Right cardiac atrium (tissue), 5 donors: ENCODE measurements at regions of chr7 and their contacts with region 1.

Region 1: GRCh38 chr7:101153969-101154692 is at the start of gene AP1S1:
- DNase-seq: peak; percentile 94 to 98 (median 97)
- ATAC-seq: peak; percentile 97
- H3K4me3 ChIP-seq: peak within 1 kb of the TSS; percentile 74
- H3K27ac ChIP-seq: no peak within 1 kb of the TSS
- H3K4me1 ChIP-seq: peaks cover 6% of the 10 kb centered on the region
- H3K27me3 ChIP-seq: no peaks in the 10 kb centered on the region
- total RNA-seq, gene AP1S1: 10.7 to 14.3 (median 12.0) TPM

Region 2: GRCh38 chr7:100966542-100967291 is 187.4 kb before region 1 on chr7:
- intact Hi-C with region 1: no loop called
- DNase-seq: peak in 1 of 3 donors; percentile 64
- ATAC-seq: no peak
- H3K4me3 ChIP-seq: peak overlapping the region; percentile 5
- H3K27ac ChIP-seq: no peak overlapping the region
- H3K4me1 ChIP-seq: no peaks in the 10 kb centered on the region
- H3K27me3 ChIP-seq: no peaks in the 10 kb centered on the region

Region 3: GRCh38 chr7:101185258-101185839 is 31.2 kb after region 1 on chr7:
- intact Hi-C with region 1: loop called in 2 of 4 experiments (anchors 5 kb)
- DNase-seq: no peak
- ATAC-seq: no peak
- H3K4me3 ChIP-seq: no peak overlapping the region
- H3K27ac ChIP-seq: no peak overlapping the region
- H3K4me1 ChIP-seq: no peaks in the 10 kb centered on the region
- H3K27me3 ChIP-seq: no peaks in the 10 kb centered on the region